ENCODE measurements at regions of chr2 and their contacts with region 1.

Region 1: GRCh38 chr2:178949584-178949983 is 100.4 kb downstream of the CCDC141 start:
- DNase-seq: no peak
- ATAC-seq: peak in 1 of 4 donors; percentile 71
- H3K4me3 ChIP-seq: no peak overlapping the region
- H3K27ac ChIP-seq: no peak overlapping the region
- H3K4me1 ChIP-seq: peaks cover 11% of the 10 kb centered on the region
- H3K27me3 ChIP-seq: no peaks in the 10 kb centered on the region
- CTCF ChIP-seq: no peak

Region 2: DNA sequence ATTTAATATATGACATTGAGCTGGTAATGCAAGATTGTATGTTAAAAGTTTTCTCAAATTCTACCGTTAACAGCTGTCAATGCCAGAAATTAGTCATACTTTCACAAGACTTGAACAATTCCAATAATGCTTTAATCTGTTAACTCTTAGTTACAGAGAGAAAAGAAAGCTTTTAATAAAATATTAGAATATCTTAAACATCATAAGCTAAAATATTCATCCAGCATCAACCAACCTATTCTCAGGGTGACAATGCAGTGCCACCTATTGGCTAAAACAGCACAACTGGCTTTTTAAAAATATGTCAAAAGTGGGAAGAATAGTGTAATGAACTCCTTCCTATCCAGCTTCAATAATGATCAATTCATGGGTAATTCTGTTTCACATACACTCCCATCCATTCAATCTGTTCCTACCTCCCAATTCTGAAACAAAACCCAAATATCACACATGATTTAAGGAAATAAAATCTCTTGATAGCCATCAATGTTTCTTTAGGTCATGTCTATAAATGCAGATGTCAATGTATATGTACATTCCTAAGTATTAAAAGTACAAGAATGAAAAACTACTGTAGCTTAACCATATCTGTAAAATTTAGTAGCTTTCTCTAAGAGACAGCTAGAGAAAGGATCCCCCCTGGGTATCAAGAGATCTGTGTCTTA is 180.1 kb after region 1 on chr2:
- intact Hi-C with region 1: loop called in 1 of 2 experiments (anchors 10 kb)
- DNase-seq: no peak
- ATAC-seq: peak in 1 of 4 donors; percentile 66
- H3K4me3 ChIP-seq: no peak overlapping the region
- H3K27ac ChIP-seq: no peak overlapping the region
- H3K4me1 ChIP-seq: no peaks in the 10 kb centered on the region
- H3K27me3 ChIP-seq: no peaks in the 10 kb centered on the region
- CTCF ChIP-seq: peak; percentile 64

Measured in psoas muscle (tissue), 8 donors.